Activated naive CD4-positive, alpha-beta T cell treated with anti-CD3 and anti-CD28 coated beads for 36 hours (primary cell): ENCODE measurements at regions of chr14 and their contacts with region 1.

Region 1: DNA sequence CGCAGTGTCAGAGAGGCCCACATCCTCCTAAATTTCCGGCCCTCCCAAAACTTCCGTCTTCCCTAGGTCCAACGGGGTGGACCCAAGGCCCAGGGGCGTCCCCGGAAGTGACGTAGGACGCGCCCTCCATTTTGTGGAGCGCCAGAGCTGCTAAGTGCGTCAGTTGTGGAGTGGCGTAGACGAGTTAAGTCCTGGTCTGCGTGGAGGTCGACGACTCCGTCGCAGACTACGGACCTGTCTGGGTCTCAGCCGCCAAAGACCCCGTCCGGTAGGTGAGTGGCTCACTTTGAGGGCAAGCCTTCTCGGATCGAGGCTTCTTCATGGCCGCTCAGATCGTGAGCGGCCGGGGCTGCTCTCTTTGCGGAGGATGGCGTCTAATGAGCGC is at the start of gene SRSF5:
- DNase-seq: peak; percentile 95
- H3K4me3 Mint-ChIP-seq: peak within 1 kb of the TSS; percentile 97
- H3K27ac Mint-ChIP-seq: peak within 1 kb of the TSS; percentile 100
- H3K4me1 Mint-ChIP-seq: peaks cover 75% of the 10 kb centered on the region
- H3K27me3 Mint-ChIP-seq: no peaks in the 10 kb centered on the region
- total RNA-seq, gene SRSF5: 296 to 297 TPM

Region 2: DNA sequence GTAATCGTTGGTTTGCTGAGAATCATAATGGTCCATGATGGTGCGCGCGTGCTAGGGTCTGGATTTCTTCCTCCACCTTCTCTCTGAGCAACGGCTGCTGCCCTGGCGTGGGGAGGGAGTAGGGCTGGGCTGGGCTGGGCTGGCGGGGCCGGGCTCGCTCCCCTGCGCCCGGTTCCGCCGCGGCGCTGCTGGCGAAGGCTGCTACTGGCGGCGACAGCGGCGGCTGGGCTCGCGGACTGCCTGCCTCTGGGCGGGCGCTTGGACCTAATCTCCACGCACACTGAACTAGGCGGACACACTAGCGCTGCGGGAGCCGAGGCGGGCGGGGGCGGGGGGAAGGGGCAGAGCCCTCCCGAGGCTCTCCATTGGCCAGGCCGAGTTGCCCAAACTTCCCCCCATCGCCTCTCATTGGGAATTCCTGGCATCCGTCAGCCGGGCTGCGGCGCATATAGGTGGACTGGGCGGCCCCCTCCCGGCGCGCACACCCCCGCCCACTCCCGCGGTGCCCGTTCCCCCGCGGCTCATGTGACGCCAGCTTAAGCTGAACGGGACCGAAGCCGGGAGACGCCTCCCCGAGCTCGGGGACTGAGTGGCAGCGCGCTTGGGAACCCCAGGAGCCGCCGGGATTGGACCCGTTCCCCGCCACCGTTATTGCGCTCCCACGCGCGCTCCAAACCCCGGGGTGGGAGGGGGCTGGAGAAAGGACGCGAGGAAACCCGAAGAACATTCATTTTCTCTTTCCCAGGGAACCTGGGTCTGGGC is 787.8 kb before region 1 on chr14 and contains the start of gene ACTN1:
- CTCF ChIA-PET with region 1: no interaction called
- intact Hi-C with region 1: loop called (anchors 5 kb)
- DNase-seq: peak; percentile 89
- H3K4me3 Mint-ChIP-seq: peak within 1 kb of the TSS; percentile 85
- H3K27ac Mint-ChIP-seq: peak within 1 kb of the TSS; percentile 87
- H3K4me1 Mint-ChIP-seq: peaks cover 32% of the 10 kb centered on the region
- H3K27me3 Mint-ChIP-seq: no peaks in the 10 kb centered on the region
- total RNA-seq, gene ACTN1: 79.7 to 80.6 TPM

Region 3: GRCh38 chr14:69398053-69398817 is 368.7 kb before region 1 on chr14 and contains the starts of genes ERH and SLC39A9:
- CTCF ChIA-PET with region 1: no interaction called
- intact Hi-C with region 1: loop called (anchors 1 kb)
- DNase-seq: peak; percentile 97
- H3K4me3 Mint-ChIP-seq: peak within 1 kb of the TSS; percentile 89
- H3K27ac Mint-ChIP-seq: peak within 1 kb of the TSS; percentile 100
- H3K4me1 Mint-ChIP-seq: peaks cover 66% of the 10 kb centered on the region
- H3K27me3 Mint-ChIP-seq: no peaks in the 10 kb centered on the region
- total RNA-seq, gene ERH: 338 to 348 TPM
- total RNA-seq, gene SLC39A9: 53.4 to 54.5 TPM

Region 4: DNA sequence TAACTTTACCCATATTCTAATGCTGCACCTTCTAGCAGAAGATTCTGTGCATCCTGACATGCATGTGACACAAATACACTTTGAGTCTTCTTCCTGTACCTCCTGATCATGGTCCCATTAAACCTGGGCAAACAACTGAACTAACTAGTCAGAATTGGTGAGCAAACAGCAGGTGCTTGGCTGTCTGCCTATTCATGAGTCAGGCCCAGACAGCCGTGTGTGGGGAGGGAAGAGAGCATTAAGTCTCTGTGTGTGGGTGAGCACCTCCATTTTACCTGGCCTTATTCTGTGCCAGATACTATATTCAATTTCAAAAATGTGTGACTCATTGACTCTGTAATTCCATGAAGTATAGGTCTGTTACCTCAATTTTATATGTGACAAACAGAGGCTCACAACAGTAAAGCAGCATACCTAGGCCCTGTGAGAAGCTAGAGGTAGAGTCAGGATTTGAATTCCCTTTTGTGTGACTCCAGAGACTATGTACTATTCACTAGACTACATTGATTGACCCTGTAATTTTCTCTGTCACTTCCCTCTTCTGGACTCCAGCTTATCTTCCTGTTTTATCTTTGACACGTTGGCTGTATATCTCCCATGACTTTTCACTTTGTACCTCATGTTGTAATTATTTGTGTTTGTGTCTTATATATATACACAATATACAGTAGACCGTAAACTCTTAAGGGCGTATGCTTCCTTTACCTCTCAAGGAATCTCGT is 123.4 kb before region 1 on chr14:
- CTCF ChIA-PET with region 1: no interaction called
- intact Hi-C with region 1: loop called (anchors 1 kb)
- DNase-seq: peak; percentile 92
- H3K4me3 Mint-ChIP-seq: no peak overlapping the region
- H3K27ac Mint-ChIP-seq: peak overlapping the region; percentile 90
- H3K4me1 Mint-ChIP-seq: peaks cover 83% of the 10 kb centered on the region
- H3K27me3 Mint-ChIP-seq: no peaks in the 10 kb centered on the region

Region 5: GRCh38 chr14:69685716-69686115 is 81.3 kb before region 1 on chr14:
- CTCF ChIA-PET with region 1: no interaction called
- intact Hi-C with region 1: loop called (anchors 1 kb)
- DNase-seq: peak; percentile 75
- H3K4me3 Mint-ChIP-seq: peak overlapping the region; percentile 41
- H3K27ac Mint-ChIP-seq: peak overlapping the region; percentile 93
- H3K4me1 Mint-ChIP-seq: peaks cover 78% of the 10 kb centered on the region
- H3K27me3 Mint-ChIP-seq: no peaks in the 10 kb centered on the region

Region 6: GRCh38 chr14:69749956-69750355 is 17.0 kb before region 1 on chr14:
- CTCF ChIA-PET with region 1: interaction called, 3 read pairs
- intact Hi-C with region 1: loop called (anchors 1 kb)
- DNase-seq: no peak
- H3K4me3 Mint-ChIP-seq: no peak overlapping the region
- H3K27ac Mint-ChIP-seq: no peak overlapping the region
- H3K4me1 Mint-ChIP-seq: peaks cover 8% of the 10 kb centered on the region
- H3K27me3 Mint-ChIP-seq: no peaks in the 10 kb centered on the region

Region 7: DNA sequence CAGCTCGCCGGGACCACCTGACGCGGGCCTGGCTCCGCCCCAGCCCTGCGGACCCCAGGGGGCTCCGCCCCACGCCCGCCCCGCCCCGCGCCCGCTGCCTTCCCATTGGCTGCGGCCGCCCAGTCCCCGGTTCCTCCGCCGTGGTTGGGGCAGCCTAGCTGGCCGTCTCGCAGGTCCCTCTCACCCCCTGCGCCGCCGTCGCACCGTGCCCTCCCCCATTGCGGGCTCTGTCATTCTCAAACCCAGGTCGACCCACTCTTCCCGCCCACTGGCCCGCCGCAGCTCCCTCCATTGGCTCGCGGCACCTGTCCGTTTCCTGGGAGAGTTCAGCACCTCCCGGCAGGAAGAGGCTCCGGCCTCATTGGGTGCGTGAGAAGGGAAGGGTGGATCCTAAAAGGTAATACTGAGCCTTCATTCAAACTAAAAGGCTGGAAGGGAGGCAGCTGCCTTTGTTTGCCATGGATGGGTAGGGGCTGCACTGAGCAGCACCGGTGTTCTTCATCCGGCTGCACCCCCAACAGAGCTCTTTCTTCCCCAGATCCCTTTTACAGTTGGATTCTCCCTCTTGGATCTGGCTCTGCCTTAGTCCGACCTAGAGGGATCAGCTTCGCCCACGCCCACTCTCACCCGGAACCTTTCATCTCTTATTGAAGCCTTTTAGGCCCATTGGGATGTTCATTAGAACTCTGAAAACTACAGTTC is 1042.7 kb after region 1 on chr14:
- CTCF ChIA-PET with region 1: no interaction called
- intact Hi-C with region 1: loop called (anchors 2 kb)
- DNase-seq: peak; percentile 96
- H3K4me3 Mint-ChIP-seq: no peak overlapping the region
- H3K27ac Mint-ChIP-seq: peak overlapping the region; percentile 57
- H3K4me1 Mint-ChIP-seq: peaks cover 9% of the 10 kb centered on the region
- H3K27me3 Mint-ChIP-seq: no peaks in the 10 kb centered on the region